ENCODE measurements at regions of chr1 and their contacts with region 1.

Region 1: GRCh38 chr1:210362526-210362925 is 33.8 kb downstream of the HHAT start:
- DNase-seq: peak; percentile 20
- H3K4me3 ChIP-seq: no peak overlapping the region
- H3K27ac ChIP-seq: no peak overlapping the region
- H3K4me1 ChIP-seq: no peaks in the 10 kb centered on the region
- H3K27me3 ChIP-seq: no peaks in the 10 kb centered on the region
- CTCF ChIP-seq: no peak

Region 2: GRCh38 chr1:209920844-209921243 is 441.7 kb before region 1 on chr1:
- intact Hi-C with region 1: no loop called
- DNase-seq: no peak
- H3K4me3 ChIP-seq: no peak overlapping the region
- H3K27ac ChIP-seq: no peak overlapping the region
- H3K4me1 ChIP-seq: no peaks in the 10 kb centered on the region
- H3K27me3 ChIP-seq: no peaks in the 10 kb centered on the region
- CTCF ChIP-seq: no peak

Region 3: DNA sequence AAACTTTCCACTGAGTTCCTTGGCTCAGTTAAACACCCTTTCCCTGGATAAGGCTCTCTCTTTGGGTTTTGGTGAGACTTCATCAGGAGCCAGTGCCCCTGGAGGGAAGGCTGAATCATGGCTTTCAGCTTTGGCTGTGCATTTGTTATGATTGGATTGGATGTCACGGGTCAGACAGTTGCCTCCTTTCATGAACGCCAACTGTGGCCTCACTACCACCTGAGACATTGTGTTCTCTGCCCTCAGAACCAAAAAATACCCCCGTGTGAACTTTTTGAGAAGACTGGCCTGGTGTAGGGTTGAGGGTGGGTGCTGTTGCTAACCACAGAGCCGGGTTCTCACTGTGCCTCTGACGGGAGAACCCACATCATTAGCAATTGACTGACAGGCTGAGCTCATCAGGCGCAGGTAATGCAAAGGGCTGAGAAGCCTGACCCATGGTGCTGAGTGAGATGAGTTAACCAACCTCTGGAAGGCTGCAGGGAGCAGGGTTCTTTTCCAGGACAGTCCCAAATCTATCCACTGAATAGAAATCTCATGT is 31.8 kb after region 1 on chr1:
- intact Hi-C with region 1: loop called (anchors 2 kb)
- DNase-seq: no peak
- H3K4me3 ChIP-seq: no peak overlapping the region
- H3K27ac ChIP-seq: no peak overlapping the region
- H3K4me1 ChIP-seq: no peaks in the 10 kb centered on the region
- H3K27me3 ChIP-seq: no peaks in the 10 kb centered on the region
- CTCF ChIP-seq: no peak

Measured in colonic mucosa (tissue), 4 donors.